ENCODE measurements at regions of chr16 and their contacts with region 1.

Region 1: DNA sequence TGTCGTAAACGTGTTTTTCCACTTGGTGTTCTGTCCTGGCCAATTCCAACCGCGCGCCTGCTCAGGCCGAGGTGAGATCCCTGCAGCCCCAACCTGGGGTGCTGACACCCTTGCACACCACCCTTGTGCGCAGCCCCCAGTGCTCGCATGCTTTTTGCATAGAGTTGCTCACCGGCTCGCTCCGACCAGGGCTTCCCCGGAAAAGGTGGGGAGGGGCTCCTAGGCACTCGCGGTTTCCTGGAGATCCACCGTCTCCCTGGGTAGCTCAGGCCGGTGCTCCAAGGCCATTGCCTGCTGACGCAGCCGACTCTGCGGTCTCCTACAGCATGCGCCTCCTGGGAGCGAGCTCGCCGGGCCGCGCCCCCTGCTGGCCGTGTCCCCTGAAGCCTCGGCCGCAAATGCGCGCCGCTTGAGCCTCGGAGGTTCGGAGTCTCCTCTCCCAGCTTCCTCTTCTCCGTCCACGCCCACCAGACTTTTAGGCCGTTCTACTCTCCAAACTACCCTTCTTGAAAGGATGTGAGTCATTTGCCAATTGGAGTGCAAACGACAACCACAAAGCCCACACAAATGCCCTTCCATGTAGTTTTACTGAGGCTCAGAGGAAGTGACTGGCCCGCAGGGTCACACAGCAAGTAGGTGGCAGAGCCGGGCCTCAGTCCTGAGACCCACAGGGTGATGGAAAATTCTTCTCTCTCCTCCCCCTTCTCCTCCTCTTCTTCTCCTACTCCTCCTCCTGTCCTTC is 7.2 kb upstream of the PDP2 start:
- DNase-seq: peak; percentile 95
- ATAC-seq: peak; percentile 89
- H3K4me3 ChIP-seq: peak overlapping the region; percentile 65; the same call in 1 of the 2 replicates
- H3K27ac ChIP-seq: peak overlapping the region; percentile 9; the same call in 1 of the 2 replicates
- H3K4me1 ChIP-seq: peaks cover 20% of the 10 kb centered on the region
- H3K27me3 ChIP-seq: no peaks in the 10 kb centered on the region
- CTCF ChIP-seq: peak; percentile 91 to 96 (median 93)
- EP300 ChIP-seq: peak in 1 of 2 experiments; percentile 46; a peak in 1 of 4 replicates
- POLR2A ChIP-seq: peak; percentile 37; the same call in 1 of the 2 replicates
- RAD21 ChIP-seq: peak; percentile 16; the same call in 1 of the 2 replicates

Region 2: GRCh38 chr16:66608241-66609138 is 264.6 kb before region 1 on chr16:
- CTCF ChIA-PET with region 1: interaction called, 36 read pairs
- POLR2A ChIA-PET with region 1: no interaction called
- RAD21 ChIA-PET with region 1: interaction called, 10 read pairs
- SMC1A ChIA-PET with region 1: no interaction called
- in situ Hi-C with region 1: no loop called
- intact Hi-C with region 1: no loop called
- DNase-seq: no peak
- ATAC-seq: peak; percentile 53
- H3K4me3 ChIP-seq: no peak overlapping the region
- H3K27ac ChIP-seq: no peak overlapping the region
- H3K4me1 ChIP-seq: peaks cover 15% of the 10 kb centered on the region
- H3K27me3 ChIP-seq: no peaks in the 10 kb centered on the region
- CTCF ChIP-seq: peak; percentile 91 to 95 (median 92)
- EP300 ChIP-seq: no peak
- POLR2A ChIP-seq: no peak; the same call in 1 of the 2 replicates
- RAD21 ChIP-seq: peak; percentile 58

Region 3: DNA sequence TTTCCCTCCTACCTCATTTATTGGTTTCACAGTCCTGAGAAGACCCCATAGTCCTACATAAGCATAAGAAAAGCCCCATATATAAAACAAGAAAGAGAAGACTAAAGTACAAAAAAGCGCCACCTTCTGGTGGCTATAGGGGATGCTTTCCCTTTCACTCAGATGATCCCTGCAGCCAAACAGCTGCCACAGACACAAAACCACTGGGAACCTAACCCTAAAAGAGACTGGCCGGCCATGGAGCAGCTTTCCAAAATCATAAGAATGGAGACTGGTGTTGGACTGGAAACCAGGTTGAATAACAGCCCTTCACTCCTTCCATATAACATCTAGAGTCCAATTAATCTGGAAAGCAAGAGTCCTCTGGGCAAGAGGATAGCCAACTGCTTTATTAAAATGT is 133.1 kb before region 1 on chr16:
- CTCF ChIA-PET with region 1: interaction called, 35 read pairs
- POLR2A ChIA-PET with region 1: no interaction called
- RAD21 ChIA-PET with region 1: interaction called, 4 read pairs
- SMC1A ChIA-PET with region 1: interaction called, 11 read pairs
- in situ Hi-C with region 1: no loop called
- intact Hi-C with region 1: loop called (anchors 5 kb)
- DNase-seq: no peak
- ATAC-seq: peak; percentile 89
- H3K4me3 ChIP-seq: no peak overlapping the region
- H3K27ac ChIP-seq: no peak overlapping the region
- H3K4me1 ChIP-seq: no peaks in the 10 kb centered on the region
- H3K27me3 ChIP-seq: no peaks in the 10 kb centered on the region
- CTCF ChIP-seq: peak; percentile 47 to 56 (median 49)
- EP300 ChIP-seq: no peak
- POLR2A ChIP-seq: no peak
- RAD21 ChIP-seq: peak; percentile 32; the same call in 1 of the 2 replicates

Region 4: GRCh38 chr16:66824006-66824405 is 49.1 kb before region 1 on chr16:
- CTCF ChIA-PET with region 1: interaction called, 106 read pairs
- POLR2A ChIA-PET with region 1: interaction called, 5 read pairs
- RAD21 ChIA-PET with region 1: interaction called, 38 read pairs
- SMC1A ChIA-PET with region 1: interaction called, 37 read pairs
- in situ Hi-C with region 1: no loop called
- intact Hi-C with region 1: no loop called
- DNase-seq: no peak
- ATAC-seq: no peak
- H3K4me3 ChIP-seq: no peak overlapping the region
- H3K27ac ChIP-seq: no peak overlapping the region
- H3K4me1 ChIP-seq: peaks cover 5% of the 10 kb centered on the region
- H3K27me3 ChIP-seq: no peaks in the 10 kb centered on the region
- CTCF ChIP-seq: no peak
- EP300 ChIP-seq: no peak
- POLR2A ChIP-seq: no peak
- RAD21 ChIP-seq: no peak

Region 5: GRCh38 chr16:66858740-66859396 is 14.2 kb before region 1 on chr16:
- CTCF ChIA-PET with region 1: interaction called, 73 read pairs
- POLR2A ChIA-PET with region 1: no interaction called
- RAD21 ChIA-PET with region 1: interaction called, 3 read pairs
- SMC1A ChIA-PET with region 1: no interaction called
- in situ Hi-C with region 1: no loop called
- intact Hi-C with region 1: no loop called
- DNase-seq: no peak
- ATAC-seq: peak; percentile 80
- H3K4me3 ChIP-seq: no peak overlapping the region
- H3K27ac ChIP-seq: no peak overlapping the region; the same call in 1 of the 2 replicates
- H3K4me1 ChIP-seq: peaks cover 4% of the 10 kb centered on the region
- H3K27me3 ChIP-seq: no peaks in the 10 kb centered on the region
- CTCF ChIP-seq: no peak
- EP300 ChIP-seq: no peak
- POLR2A ChIP-seq: no peak
- RAD21 ChIP-seq: no peak

Measured in GM12878 (cell line).